B cell (primary cell): ENCODE measurements at regions of chr4 and their contacts with region 1.

Region 1: GRCh38 chr4:186037692-186038658 is 31.0 kb upstream of the TLR3 start:
- DNase-seq: peak; percentile 64
- ATAC-seq: peak; percentile 33
- H3K4me3 ChIP-seq: no peak overlapping the region
- H3K4me3 Mint-ChIP-seq: no peak overlapping the region
- H3K27ac ChIP-seq: no peak overlapping the region
- H3K27ac Mint-ChIP-seq: no peak overlapping the region
- H3K4me1 ChIP-seq: no peaks in the 10 kb centered on the region
- H3K4me1 Mint-ChIP-seq: no peaks in the 10 kb centered on the region
- H3K27me3 ChIP-seq: peaks cover 0 to 12% (median 3%) of the 10 kb centered on the region in 4 experiments
- H3K27me3 Mint-ChIP-seq: peaks cover 30% of the 10 kb centered on the region
- CTCF ChIP-seq: peak; percentile 74

Region 2: DNA sequence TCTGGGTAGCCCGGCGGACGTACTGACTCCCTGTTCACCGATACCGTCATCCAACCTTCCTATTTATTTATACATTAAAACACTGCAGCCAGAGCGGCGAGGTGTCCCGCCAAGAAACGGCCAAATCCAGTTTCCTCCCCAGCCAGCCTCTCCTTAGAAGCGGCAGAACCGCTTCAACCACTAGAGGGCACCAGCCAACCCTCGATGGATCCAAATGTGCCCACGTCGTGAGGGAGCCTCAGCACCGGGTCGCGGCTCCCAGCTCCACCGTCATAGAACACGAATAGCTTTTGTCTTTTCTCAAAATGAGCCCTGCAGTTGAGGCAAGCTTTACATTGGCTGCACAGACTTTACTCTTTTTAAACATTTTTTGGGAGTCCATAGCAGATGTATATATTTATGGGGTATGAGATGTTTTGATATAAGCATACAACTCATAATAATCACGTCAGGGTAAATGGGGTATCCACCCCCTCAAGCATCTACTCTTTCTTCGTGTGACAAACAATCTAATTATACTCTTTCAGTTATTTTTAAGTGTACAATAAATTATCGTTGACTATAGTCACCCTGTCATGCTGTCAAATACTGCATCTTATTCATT is 1032.7 kb before region 1 on chr4:
- CTCF ChIA-PET with region 1: interaction called, 3 read pairs
- POLR2A ChIA-PET with region 1: no interaction called
- intact Hi-C with region 1: loop called (anchors 10 kb)
- DNase-seq: peak; percentile 83
- ATAC-seq: peak; percentile 93
- H3K4me3 ChIP-seq: no peak overlapping the region
- H3K4me3 Mint-ChIP-seq: peak overlapping the region; percentile 50
- H3K27ac ChIP-seq: no peak overlapping the region
- H3K27ac Mint-ChIP-seq: no peak overlapping the region
- H3K4me1 ChIP-seq: peaks cover 7 to 10% of the 10 kb centered on the region in 2 donors
- H3K4me1 Mint-ChIP-seq: peaks cover 6% of the 10 kb centered on the region
- H3K27me3 ChIP-seq: peaks cover 0 to 32% (median 9%) of the 10 kb centered on the region in 4 experiments
- H3K27me3 Mint-ChIP-seq: peaks cover 56% of the 10 kb centered on the region
- CTCF ChIP-seq: peak; percentile 97

Region 3: GRCh38 chr4:186027405-186027804 is 10.6 kb before region 1 on chr4:
- CTCF ChIA-PET with region 1: interaction called, 13 read pairs
- POLR2A ChIA-PET with region 1: no interaction called
- intact Hi-C with region 1: no loop called
- DNase-seq: no peak
- ATAC-seq: no peak
- H3K4me3 ChIP-seq: no peak overlapping the region
- H3K4me3 Mint-ChIP-seq: no peak overlapping the region
- H3K27ac ChIP-seq: no peak overlapping the region
- H3K27ac Mint-ChIP-seq: no peak overlapping the region
- H3K4me1 ChIP-seq: no peaks in the 10 kb centered on the region
- H3K4me1 Mint-ChIP-seq: no peaks in the 10 kb centered on the region
- H3K27me3 ChIP-seq: peaks cover 0 to 20% (median 4%) of the 10 kb centered on the region in 4 experiments
- H3K27me3 Mint-ChIP-seq: peaks cover 66% of the 10 kb centered on the region
- CTCF ChIP-seq: no peak

Region 4: DNA sequence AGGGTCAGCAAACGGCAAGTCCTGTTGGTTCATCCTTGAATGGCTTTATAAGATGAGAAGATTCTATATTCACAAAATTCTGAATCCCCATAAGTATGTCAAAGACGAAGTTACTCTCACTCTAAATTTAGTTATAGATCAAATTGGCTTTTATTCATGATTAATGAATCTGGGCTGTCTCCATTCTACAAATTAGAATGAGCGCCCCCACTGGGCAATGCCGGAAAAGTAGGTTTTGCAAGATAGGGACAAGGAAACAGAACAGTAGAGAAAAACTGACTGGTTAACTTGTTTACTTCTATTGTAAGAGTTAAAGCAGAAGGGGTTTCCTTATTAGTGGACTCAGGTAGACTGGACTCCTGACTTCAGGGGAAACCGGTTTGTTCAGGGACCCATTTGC is 328.4 kb after region 1 on chr4:
- CTCF ChIA-PET with region 1: no interaction called
- POLR2A ChIA-PET with region 1: no interaction called
- intact Hi-C with region 1: no loop called
- DNase-seq: no peak
- ATAC-seq: no peak
- H3K4me3 ChIP-seq: no peak overlapping the region
- H3K4me3 Mint-ChIP-seq: no peak overlapping the region
- H3K27ac ChIP-seq: no peak overlapping the region
- H3K27ac Mint-ChIP-seq: no peak overlapping the region
- H3K4me1 ChIP-seq: no peaks in the 10 kb centered on the region
- H3K4me1 Mint-ChIP-seq: no peaks in the 10 kb centered on the region
- H3K27me3 ChIP-seq: no peaks in the 10 kb centered on the region
- H3K27me3 Mint-ChIP-seq: no peaks in the 10 kb centered on the region
- CTCF ChIP-seq: no peak